Ascending aorta (tissue), 2 donors: ENCODE measurements at regions of chr15 and their contacts with region 1.

Region 1: DNA sequence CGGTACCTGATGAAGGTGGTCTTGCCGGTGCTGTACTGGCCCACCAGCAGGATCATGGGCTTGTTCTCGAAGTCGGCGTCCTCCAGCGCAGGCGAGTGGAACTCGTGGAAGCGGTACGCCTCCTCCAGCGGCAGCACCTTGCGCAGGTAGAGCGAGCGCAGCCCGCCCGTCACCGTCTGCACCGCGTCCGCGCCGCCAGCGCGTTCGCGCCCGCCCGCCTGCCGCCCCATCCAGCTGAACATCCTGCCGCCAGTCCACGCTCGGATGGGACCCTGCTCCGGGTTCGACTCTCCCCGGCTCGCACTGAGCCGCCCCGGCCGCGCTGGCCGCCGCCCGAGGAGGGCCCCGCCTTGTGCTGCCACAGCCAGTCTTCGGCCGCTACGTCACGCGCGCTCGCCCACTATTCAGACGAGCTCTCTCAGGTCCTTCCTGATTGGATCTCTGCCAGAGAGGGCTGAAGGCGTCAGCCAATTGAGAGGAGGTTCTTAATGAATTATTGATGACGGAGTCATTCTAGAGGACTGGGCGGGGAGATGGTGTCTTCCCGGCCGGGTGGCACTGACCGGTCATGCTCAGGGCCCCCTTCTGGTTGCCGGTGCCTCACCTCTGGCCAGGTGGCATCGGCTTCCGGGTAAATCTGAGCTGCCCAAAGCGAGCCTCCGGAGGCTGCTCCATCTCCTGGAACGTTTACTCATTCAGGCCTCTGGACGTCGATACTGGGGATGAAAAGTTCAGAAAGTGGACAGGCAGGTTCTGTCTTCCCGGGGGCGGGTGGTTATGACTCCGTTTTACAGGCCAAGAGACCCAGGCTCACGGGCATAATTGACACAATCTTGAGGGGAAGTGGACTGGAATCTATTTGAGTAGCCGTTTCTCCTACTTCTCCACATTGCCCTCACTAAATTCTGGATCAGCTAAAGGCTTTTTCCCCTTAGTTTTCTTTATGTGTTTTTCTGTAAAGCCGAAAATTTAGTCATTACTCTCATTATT is at the start of gene EHD4:
- DNase-seq: peak; percentile 98 to 100
- H3K4me3 ChIP-seq: peak within 1 kb of the TSS; percentile 96 to 99
- H3K27ac ChIP-seq: peak within 1 kb of the TSS; percentile 98
- H3K4me1 ChIP-seq: peaks cover 0 to 24% of the 10 kb centered on the region in 2 donors
- H3K27me3 ChIP-seq: no peaks in the 10 kb centered on the region
- CTCF ChIP-seq: peak; percentile 42 to 56 (median 44)
- total RNA-seq, gene EHD4: 70.4 TPM

Region 2: GRCh38 chr15:41894791-41895463 is 77.6 kb before region 1 on chr15:
- intact Hi-C with region 1: loop called (anchors 2 kb)
- DNase-seq: peak; percentile 69 to 90
- H3K4me3 ChIP-seq: peak overlapping the region in 1 of 2 donors; percentile 42
- H3K27ac ChIP-seq: peak overlapping the region; percentile 66 to 76
- H3K4me1 ChIP-seq: peaks cover 0 to 12% of the 10 kb centered on the region in 2 donors
- H3K27me3 ChIP-seq: no peaks in the 10 kb centered on the region
- CTCF ChIP-seq: peak in 2 of 3 experiments; percentile 21 to 38

Region 3: DNA sequence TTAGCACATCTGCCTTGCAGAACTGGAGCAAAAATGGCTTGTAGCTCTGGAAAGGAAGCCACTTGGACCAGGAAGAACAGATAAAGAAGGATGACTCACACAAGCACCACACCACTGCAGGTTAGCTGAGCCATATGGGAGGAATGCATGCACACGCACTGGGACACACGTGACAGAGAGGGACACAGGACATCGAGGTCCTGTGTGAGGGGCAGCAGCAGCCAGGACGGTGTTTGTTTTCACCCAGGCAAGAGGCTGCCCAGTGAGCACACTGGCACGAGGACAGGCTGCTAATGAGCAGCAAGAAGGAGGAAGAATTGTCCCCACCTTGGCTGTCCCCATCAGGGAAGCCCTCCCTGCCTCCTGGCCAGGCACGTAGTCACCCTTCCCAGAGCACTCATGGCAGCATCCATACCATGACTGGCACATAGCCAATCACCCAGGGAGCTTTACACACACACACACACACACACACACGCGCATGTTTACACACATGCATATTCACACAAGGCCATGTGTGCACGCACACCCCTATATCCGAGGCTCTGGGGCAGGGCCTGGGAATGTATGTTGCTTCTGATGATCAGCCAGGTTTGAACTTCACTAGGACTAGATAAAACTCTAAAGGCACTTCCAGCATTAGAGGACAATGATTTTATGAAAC is 54.6 kb before region 1 on chr15:
- intact Hi-C with region 1: loop called (anchors 5 kb)
- DNase-seq: peak in 1 of 2 donors; percentile 39
- H3K4me3 ChIP-seq: no peak overlapping the region
- H3K27ac ChIP-seq: peak overlapping the region; percentile 70 to 79
- H3K4me1 ChIP-seq: peaks cover 33 to 58% of the 10 kb centered on the region in 2 donors
- H3K27me3 ChIP-seq: no peaks in the 10 kb centered on the region
- CTCF ChIP-seq: no peak

Region 4: GRCh38 chr15:41930221-41930866 is 42.2 kb before region 1 on chr15:
- intact Hi-C with region 1: loop called (anchors 1 kb)
- DNase-seq: peak in 1 of 2 donors; percentile 88
- H3K4me3 ChIP-seq: no peak overlapping the region
- H3K27ac ChIP-seq: peak overlapping the region; percentile 74 to 80
- H3K4me1 ChIP-seq: peaks cover 35 to 83% of the 10 kb centered on the region in 2 donors
- H3K27me3 ChIP-seq: no peaks in the 10 kb centered on the region
- CTCF ChIP-seq: peak; percentile 23 to 55 (median 49)

Region 5: DNA sequence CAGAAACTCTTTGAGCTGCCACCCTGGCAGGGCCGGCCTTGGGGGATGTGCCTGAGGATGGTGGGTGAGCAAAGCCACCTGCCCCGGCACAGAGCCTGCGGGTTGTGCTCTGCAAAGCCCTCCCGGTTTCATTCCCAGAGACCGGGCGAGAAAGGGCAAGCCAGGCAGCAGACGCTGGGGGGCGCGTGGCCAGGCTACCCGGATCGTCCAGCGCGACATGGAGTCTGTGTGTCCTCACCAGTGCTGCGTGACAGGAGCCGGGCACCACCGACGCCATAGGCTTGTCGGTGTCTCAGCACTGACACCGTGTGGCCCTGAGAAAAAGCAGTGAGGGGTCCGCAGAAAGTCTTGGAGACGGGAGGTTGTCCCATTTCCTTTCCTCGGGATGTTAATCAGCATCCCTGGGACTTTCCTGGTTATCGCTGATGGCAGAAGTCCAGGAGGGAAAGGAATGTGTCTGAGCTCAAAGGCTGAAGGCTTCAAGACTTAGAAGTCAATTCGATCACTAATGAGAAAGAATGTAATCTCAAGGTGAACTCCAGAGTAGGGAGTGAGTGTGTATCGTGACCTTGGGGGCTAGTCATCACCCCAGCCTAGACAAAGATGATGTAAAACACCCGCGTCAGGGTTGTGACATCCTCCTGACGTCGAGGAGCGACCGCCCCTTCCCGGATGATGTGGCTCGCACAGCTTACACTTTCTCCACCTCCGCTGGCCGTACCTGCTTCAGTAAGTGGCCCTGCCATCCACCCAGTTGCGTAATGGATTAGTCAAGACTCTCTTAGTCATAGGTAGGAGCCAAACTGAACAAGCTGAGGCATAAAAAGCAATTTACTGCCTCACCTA is 84.6 kb after region 1 on chr15:
- intact Hi-C with region 1: no loop called
- DNase-seq: peak; percentile 25 to 75
- H3K4me3 ChIP-seq: peak overlapping the region in 1 of 2 donors; percentile 51
- H3K27ac ChIP-seq: no peak overlapping the region
- H3K4me1 ChIP-seq: no peaks in the 10 kb centered on the region
- H3K27me3 ChIP-seq: no peaks in the 10 kb centered on the region
- CTCF ChIP-seq: peak; percentile 57 to 69 (median 57)

Region 6: GRCh38 chr15:42271000-42271399 is 298.5 kb after region 1 on chr15:
- intact Hi-C with region 1: no loop called
- DNase-seq: no peak
- H3K4me3 ChIP-seq: peak overlapping the region in 1 of 2 donors; percentile 17
- H3K27ac ChIP-seq: peak overlapping the region in 1 of 2 donors; percentile 100
- H3K4me1 ChIP-seq: peaks cover 9 to 37% of the 10 kb centered on the region in 2 donors
- H3K27me3 ChIP-seq: no peaks in the 10 kb centered on the region
- CTCF ChIP-seq: no peak